Activated T-helper 2 cell treated with anti-CD3 and anti-CD28 coated beads, Interferon-gamma antibody, Interleukin-2, Interleukin-4, amounts not matched to agents 10 μg/mL and 5 μg/mL and 100 μg/mL, durations not matched to agents 14 hours and 24 hours and 36 hours (primary cell): ENCODE measurements at regions of chr17 and their contacts with region 1.

Region 1: DNA sequence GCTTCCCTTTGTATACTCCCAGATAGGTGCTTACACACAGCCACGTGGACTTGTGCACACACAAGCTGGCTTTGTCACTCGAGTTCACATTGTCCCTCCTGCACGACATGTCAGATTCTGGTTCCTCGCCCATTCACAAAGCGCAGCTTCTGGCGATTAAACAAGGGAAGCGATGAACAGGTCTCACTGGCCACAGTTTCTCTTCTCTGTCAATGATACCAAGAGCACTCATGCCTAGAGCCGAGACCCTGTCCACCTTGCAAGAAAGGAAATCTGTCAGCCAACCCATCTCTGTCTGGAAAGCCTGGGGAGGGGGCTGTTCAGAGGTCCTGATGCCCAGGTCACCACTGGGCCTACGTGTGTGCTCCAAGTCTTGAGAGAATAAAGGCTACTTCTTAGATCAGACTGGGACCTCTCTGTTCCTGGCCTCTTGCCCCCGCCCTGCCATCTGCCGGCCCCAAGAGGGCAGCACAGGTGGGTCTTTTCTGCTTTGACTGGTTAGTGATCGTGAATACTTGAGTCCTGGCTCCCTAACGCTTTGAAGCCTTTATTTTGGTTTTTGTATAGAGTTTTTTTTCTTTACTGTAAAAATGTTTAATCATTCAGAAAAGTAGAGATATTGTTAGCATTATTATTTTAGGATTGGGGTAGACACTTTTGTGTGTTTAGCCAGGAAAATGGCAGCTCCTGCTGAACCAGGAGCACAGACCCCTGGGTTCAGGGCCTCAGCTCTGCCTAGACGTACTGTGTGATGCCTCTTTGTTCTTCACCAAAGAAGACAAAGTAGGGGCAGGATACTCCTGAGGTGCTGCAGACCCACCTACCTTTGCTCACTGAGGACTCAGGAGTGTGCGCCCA is 104.7 kb downstream of the MRM1 start:
- DNase-seq: peak; percentile 21
- H3K4me3 Mint-ChIP-seq: no peak overlapping the region
- H3K27ac Mint-ChIP-seq: no peak overlapping the region
- H3K4me1 Mint-ChIP-seq: peaks cover 1% of the 10 kb centered on the region
- H3K27me3 Mint-ChIP-seq: peaks cover 29% of the 10 kb centered on the region

Region 2: GRCh38 chr17:36578671-36579070 is 127.4 kb before region 1 on chr17:
- intact Hi-C with region 1: no loop called
- DNase-seq: no peak
- H3K4me3 Mint-ChIP-seq: no peak overlapping the region
- H3K27ac Mint-ChIP-seq: no peak overlapping the region
- H3K4me1 Mint-ChIP-seq: peaks cover 3% of the 10 kb centered on the region
- H3K27me3 Mint-ChIP-seq: no peaks in the 10 kb centered on the region

Region 3: GRCh38 chr17:36614933-36615332 is 91.2 kb before region 1 on chr17:
- intact Hi-C with region 1: no loop called
- DNase-seq: no peak
- H3K4me3 Mint-ChIP-seq: no peak overlapping the region
- H3K27ac Mint-ChIP-seq: no peak overlapping the region
- H3K4me1 Mint-ChIP-seq: no peaks in the 10 kb centered on the region
- H3K27me3 Mint-ChIP-seq: no peaks in the 10 kb centered on the region

Region 4: DNA sequence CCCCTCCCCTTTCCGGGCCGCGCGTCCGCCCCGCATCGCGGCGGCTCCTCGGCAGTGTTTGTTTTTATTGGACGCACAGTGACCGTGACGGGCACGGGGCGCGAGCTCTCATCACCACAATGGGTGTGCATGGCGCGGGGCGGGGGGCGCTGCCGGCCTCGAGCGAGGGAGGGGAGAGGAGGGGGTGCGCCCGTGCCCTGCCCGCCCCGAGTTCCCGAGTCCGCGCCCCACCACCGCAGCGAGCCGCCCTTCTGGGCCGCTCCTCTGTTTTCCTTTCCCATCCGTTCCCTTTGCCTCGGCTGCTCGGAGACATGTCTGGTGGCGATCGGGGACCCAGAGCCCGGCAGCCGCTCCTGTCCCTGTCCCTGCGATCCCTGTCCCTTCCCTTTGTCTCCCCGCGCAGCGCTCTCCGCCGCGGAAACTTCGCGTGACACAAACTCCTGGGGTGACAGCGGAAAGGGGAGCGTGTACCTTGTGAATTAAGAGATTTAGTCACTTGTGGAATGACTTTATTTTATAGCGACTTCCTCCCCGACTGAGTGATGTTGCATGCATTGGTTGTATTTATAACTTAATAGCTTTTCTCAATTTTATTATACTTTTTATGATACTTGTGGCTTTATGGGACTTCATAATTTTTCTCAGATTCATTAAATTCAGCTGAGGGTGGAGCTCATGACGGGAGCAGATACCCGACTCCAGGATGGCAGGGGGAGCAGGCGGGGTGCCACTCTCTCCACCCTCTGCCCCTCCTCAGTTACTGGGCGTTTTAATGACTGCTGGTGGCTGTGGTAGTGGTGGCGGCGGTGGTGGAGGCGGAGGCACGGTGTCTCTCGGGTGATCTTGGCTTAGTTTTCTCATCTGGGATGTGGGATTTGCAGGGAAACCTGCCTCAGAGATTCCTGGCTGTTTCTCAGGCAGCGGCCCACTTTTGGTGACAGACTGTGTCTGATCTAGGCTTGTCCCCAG is 63.9 kb before region 1 on chr17:
- intact Hi-C with region 1: loop called (anchors 5 kb)
- DNase-seq: no peak
- H3K4me3 Mint-ChIP-seq: peak overlapping the region; percentile 56
- H3K27ac Mint-ChIP-seq: no peak overlapping the region
- H3K4me1 Mint-ChIP-seq: peaks cover 10% of the 10 kb centered on the region
- H3K27me3 Mint-ChIP-seq: peaks cover 68% of the 10 kb centered on the region

Region 5: DNA sequence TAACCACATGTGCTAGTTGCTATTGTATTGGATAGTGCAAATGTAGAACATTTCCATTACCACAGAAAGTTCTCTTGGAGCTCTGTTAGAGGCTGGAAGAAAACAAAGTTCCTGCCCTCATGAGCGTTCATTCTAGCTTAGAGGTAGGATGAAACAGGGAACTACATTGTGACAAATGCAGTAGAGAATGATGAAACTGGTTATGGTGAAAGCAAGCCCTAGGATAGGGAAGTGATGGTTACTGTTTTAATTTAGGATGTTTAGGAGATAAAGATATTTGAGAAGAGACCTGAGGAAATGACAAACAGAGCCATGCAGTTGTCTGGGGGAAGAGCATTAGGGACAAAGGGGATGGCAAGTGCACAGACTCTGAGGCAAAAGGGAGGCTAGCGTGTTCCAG is 293.4 kb after region 1 on chr17:
- intact Hi-C with region 1: no loop called
- DNase-seq: no peak
- H3K4me3 Mint-ChIP-seq: no peak overlapping the region
- H3K27ac Mint-ChIP-seq: no peak overlapping the region
- H3K4me1 Mint-ChIP-seq: no peaks in the 10 kb centered on the region
- H3K27me3 Mint-ChIP-seq: no peaks in the 10 kb centered on the region